Left cardiac atrium (tissue), 4 donors: ENCODE measurements at regions of chr1 and their contacts with region 1.

Region 1: DNA sequence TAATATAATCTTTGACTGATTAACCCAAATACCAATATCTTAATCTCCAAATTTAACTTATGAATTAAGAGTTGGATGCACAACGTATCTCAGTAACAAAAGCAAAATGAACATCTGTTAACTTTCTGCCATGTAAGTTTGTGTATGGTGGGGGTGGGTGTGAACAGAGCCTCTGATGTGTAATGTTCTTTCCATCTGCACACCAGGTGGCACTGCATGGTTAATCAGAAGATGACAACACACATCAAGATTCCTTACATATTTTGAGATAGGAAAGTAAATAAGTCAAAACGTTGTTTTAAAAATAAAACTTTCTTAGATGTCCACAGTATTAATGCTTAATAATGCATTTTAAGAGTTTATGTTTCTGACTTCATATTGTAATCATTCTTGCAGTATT is 251.9 kb downstream of the DPYD start:
- DNase-seq: no peak
- ATAC-seq: no peak

Region 2: GRCh38 chr1:98053471-98054366 is 384.8 kb after region 1 on chr1:
- intact Hi-C with region 1: loop called in 1 of 2 experiments (anchors 10 kb)
- DNase-seq: peak; percentile 63
- ATAC-seq: peak; percentile 98 to 99